ENCODE measurements at regions of chr1 and their contacts with region 1.

Region 1: GRCh38 chr1:154404984-154405761 is at the start of gene IL6R:
- DNase-seq: peak; percentile 68
- ATAC-seq: peak; percentile 60
- H3K4me3 Mint-ChIP-seq: peak within 1 kb of the TSS; percentile 81
- H3K27ac Mint-ChIP-seq: peak within 1 kb of the TSS; percentile 86
- H3K4me1 Mint-ChIP-seq: peaks cover 55% of the 10 kb centered on the region
- H3K27me3 Mint-ChIP-seq: no peaks in the 10 kb centered on the region
- CTCF ChIP-seq: no peak
- total RNA-seq, gene IL6R: 3.3 and 5.1 TPM in 2 replicates

Region 2: DNA sequence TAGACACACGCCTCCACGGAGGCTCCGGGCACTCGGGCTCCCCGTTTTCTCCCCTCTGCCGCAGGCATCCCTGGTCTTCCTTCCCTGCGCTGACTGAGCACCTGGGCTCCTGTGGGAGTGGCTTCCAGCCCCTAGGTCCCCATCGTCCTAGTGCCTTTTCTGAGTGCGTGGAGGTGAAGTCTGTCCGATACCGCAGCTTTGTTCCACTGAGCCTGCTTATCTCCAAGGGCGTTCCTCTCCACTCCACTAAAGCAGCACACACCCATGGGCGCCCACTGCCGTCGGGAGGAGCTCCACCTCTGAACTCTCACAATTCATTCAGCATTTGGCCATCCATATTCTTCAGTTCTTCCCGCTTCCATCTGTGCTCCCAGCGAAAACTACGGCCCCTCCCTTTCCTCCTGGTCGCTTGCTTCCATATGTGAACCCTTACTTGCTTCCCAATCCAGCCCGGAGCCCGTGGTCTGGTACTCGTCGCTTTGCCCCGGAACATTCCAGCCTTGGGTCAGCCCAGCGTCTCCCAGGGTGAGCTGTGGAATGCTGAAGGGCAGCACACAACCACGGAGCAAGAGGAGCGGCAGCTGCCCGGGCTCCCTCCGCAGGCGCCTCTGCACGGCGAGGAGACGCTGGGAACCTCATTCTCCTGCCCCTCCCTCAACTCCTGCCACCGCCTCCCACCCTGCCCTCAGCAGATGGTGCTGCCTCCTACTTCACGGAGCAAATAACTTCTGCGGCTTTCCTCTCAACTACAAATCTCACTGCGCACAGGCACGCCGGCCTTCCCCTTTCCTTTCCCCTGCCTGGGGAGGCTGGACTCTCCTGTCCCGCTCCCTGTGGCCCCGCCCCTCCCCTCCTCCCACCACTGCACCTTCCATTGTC is 52.4 kb before region 1 on chr1:
- CTCF ChIA-PET with region 1: interaction called, 4 read pairs
- POLR2A ChIA-PET with region 1: no interaction called
- intact Hi-C with region 1: loop called (anchors 1 kb)
- DNase-seq: peak; percentile 22
- ATAC-seq: peak; percentile 71
- H3K4me3 Mint-ChIP-seq: peak overlapping the region; percentile 80
- H3K27ac Mint-ChIP-seq: peak overlapping the region; percentile 41
- H3K4me1 Mint-ChIP-seq: peaks cover 18% of the 10 kb centered on the region
- H3K27me3 Mint-ChIP-seq: peaks cover 21% of the 10 kb centered on the region
- CTCF ChIP-seq: no peak

Region 3: DNA sequence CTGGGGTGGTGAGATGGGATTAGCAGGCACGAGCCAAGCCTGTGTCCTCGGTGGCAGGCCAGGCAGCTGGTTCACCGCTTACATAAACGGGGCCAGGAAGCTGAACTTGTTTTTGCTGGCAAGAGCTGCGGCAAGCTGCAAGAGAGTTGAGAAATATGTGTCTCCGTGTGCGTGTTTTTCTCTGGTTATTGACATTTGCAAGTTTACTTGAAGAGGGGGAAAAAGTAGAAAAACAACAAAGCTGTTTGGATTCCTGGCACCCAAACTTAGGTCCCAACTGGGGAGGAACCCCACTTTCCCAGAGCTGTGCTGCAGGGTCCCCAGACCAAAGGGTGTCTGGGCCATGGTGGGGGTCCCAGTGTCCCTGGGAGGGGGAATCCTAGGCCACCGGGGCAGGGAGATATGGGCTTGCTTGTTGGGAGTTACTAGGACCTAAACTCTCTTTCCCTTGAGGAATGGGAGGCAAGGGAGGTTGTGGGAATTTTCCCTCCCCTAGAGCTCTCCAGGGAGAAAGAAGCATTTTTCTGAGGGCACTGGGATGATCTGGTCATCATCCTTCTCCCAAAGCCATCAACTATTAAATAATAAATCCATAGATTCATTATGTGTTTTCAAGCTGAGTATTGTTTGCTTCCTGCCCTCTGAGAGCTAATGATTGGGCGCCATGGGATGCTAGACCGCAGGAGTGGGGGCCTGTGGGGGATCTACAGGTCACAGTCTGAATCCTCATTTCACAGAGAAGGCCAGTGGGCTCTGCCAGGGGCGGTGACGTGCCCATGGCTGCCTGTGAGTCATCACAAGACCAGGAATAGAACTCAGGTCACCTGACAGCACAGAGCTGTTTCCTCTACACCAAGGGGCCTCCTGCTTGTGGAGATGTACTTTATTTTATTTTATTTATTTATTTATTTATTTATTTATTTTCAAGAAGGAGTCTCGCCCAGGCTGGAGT is 14.7 kb after region 1 on chr1:
- CTCF ChIA-PET with region 1: interaction called, 5 read pairs
- POLR2A ChIA-PET with region 1: interaction called, 21 read pairs
- intact Hi-C with region 1: loop called (anchors 1 kb)
- DNase-seq: peak; percentile 36
- ATAC-seq: peak; percentile 93
- H3K4me3 Mint-ChIP-seq: peak overlapping the region; percentile 66
- H3K27ac Mint-ChIP-seq: peak overlapping the region; percentile 83
- H3K4me1 Mint-ChIP-seq: peaks cover 35% of the 10 kb centered on the region
- H3K27me3 Mint-ChIP-seq: no peaks in the 10 kb centered on the region
- CTCF ChIP-seq: no peak

Region 4: DNA sequence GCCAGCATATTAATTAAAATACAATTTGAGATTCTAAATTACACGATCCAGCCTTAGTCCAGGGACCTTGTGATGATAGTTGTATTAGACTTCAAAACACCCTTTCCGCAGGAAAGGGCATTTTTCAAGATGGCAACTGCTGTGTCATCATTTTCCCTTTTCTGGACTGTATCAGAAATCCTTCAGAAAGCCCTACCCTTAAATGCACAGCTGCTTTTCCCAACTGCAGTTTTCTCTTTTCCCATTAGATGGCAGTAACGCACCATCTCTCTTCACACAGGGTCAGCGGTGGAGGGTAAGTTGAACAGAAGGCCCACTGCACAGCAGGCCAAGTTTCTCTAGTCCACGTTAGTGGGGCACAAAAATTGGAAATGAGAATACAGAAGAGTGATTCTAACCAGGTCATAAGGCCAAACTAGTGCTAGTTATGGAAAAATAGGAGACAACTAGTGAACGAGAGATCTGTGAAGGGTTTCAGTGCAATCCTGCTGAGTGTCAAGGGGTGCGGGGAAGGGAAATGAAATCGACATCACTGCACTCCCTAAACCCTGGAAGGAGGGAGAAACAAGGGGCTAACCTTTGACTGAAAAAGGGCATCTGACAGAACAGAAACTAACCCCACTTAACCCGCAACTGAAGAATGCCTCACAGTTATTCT is 74.7 kb after region 1 on chr1:
- CTCF ChIA-PET with region 1: interaction called, 13 read pairs
- POLR2A ChIA-PET with region 1: interaction called, 3 read pairs
- intact Hi-C with region 1: loop called (anchors 1 kb)
- DNase-seq: no peak
- ATAC-seq: peak; percentile 95
- H3K4me3 Mint-ChIP-seq: no peak overlapping the region
- H3K27ac Mint-ChIP-seq: no peak overlapping the region
- H3K4me1 Mint-ChIP-seq: peaks cover 6% of the 10 kb centered on the region
- H3K27me3 Mint-ChIP-seq: no peaks in the 10 kb centered on the region
- CTCF ChIP-seq: peak; percentile 86

Region 5: DNA sequence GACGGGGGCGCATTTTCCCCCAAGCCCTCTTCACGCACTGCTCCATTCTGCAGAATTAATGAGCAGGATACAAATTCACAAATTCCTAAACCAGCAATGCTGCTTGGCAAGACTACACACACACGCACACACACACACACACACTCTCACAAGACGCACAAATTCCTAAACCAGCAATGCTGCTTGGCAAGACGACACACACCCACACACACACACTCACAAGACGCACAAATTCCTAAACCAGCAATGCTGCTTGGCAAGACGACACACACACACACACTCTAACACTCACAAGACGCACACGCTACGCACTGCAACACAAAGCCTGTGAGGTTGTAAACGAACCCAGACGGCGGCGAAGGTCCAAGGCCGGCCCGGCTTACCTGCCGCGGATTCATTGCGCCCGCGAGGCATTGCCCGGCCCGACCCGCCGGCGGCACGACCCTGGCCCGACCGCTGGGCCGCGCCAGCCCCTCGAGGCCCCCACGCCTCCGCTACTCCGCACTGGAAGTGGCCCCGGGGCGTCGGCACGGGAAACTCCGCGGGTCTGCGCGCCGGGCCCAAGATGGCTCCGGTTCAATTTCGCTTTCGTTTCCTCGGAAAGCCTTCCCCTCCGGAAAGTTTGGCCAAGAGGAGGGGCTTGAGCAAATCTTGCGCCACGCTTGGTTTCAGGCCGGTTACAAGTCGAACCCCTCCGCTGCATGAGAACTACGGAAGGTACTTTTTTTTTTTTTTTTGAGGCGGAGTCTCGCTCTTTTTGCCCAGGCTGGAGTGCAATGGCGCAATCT is 202.6 kb after region 1 on chr1 and contains the start of gene ADAR:
- CTCF ChIA-PET with region 1: no interaction called
- POLR2A ChIA-PET with region 1: no interaction called
- intact Hi-C with region 1: loop called (anchors 5 kb)
- DNase-seq: peak; percentile 80
- ATAC-seq: peak; percentile 91
- H3K4me3 Mint-ChIP-seq: peak within 1 kb of the TSS; percentile 89
- H3K27ac Mint-ChIP-seq: peak within 1 kb of the TSS; percentile 90
- H3K4me1 Mint-ChIP-seq: peaks cover 73% of the 10 kb centered on the region
- H3K27me3 Mint-ChIP-seq: no peaks in the 10 kb centered on the region
- CTCF ChIP-seq: no peak
- total RNA-seq, gene ADAR: 209 and 216 TPM in 2 replicates

Region 6: DNA sequence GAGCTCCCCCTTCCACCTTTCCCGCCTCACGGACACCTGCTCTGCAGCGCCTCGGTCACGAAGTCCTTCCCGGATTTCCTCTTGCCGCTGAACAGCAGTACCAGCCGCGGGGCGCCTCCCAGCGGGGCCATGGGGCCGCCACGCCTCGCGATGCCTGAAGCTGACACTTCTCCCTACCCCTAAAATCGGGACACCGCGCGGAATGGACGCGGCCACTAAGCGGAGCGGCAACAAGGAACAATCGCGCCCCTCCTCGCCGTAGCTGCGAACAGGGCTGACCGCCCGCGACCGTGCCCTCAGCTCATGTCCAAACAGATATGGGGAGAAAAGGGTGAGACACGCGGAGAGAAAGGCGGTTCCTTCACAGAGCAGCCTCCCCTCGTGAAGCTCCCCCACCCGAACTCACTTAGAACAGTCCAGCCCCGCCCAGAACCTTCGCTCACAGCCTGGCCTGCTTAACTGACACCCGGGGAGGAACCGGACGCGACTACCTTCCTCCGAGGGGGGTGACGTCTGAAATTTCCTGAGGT is 531.4 kb after region 1 on chr1 and contains the start of gene PMVK:
- CTCF ChIA-PET with region 1: no interaction called
- POLR2A ChIA-PET with region 1: no interaction called
- intact Hi-C with region 1: no loop called
- DNase-seq: peak; percentile 90
- ATAC-seq: peak; percentile 90
- H3K4me3 Mint-ChIP-seq: peak within 1 kb of the TSS; percentile 98
- H3K27ac Mint-ChIP-seq: peak within 1 kb of the TSS; percentile 100
- H3K4me1 Mint-ChIP-seq: peaks cover 58% of the 10 kb centered on the region
- H3K27me3 Mint-ChIP-seq: no peaks in the 10 kb centered on the region
- CTCF ChIP-seq: no peak
- total RNA-seq, gene PMVK: 24.6 and 26.3 TPM in 2 replicates

Measured in activated B cell treated with CpG ODN at 0.5 μM for 24 hours (primary cell).